ENCODE measurements at regions of chr1 and their contacts with region 1.

Region 1: GRCh38 chr1:151281969-151282882 is at the start of gene ZNF687:
- DNase-seq: peak; percentile 98
- H3K4me3 Mint-ChIP-seq: peak within 1 kb of the TSS; percentile 94
- H3K27ac Mint-ChIP-seq: peak within 1 kb of the TSS; percentile 100
- H3K4me1 Mint-ChIP-seq: peaks cover 36% of the 10 kb centered on the region
- H3K27me3 Mint-ChIP-seq: no peaks in the 10 kb centered on the region
- total RNA-seq, gene ZNF687: 26.9 and 27.3 TPM in 2 replicates

Region 2: GRCh38 chr1:150642296-150642695 is 639.9 kb before region 1 on chr1:
- intact Hi-C with region 1: no loop called
- DNase-seq: no peak
- H3K4me3 Mint-ChIP-seq: no peak overlapping the region
- H3K27ac Mint-ChIP-seq: no peak overlapping the region
- H3K4me1 Mint-ChIP-seq: no peaks in the 10 kb centered on the region
- H3K27me3 Mint-ChIP-seq: no peaks in the 10 kb centered on the region

Region 3: DNA sequence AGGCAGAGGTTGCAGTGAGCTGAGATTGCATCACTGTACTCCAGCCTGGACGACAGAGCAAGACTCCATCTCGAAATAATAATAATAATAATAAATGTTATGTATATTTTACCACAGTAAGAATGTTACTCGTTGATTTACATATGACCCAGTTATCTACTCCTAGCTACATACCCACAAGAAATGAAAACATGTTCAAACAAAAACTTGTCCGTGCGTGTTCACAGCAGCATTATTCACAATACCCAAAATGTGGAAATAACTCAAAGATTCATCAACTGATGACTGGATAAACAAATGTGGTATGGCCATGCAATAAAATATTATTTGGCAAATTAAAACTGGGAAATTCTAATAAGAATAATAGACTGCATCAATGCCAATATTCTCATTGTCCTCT is 621.1 kb before region 1 on chr1:
- intact Hi-C with region 1: no loop called
- DNase-seq: no peak
- H3K4me3 Mint-ChIP-seq: no peak overlapping the region
- H3K27ac Mint-ChIP-seq: no peak overlapping the region
- H3K4me1 Mint-ChIP-seq: peaks cover 6% of the 10 kb centered on the region
- H3K27me3 Mint-ChIP-seq: no peaks in the 10 kb centered on the region

Region 4: GRCh38 chr1:151059078-151059907 is 222.9 kb before region 1 on chr1 and contains the start of gene CDC42SE1:
- intact Hi-C with region 1: loop called (anchors 5 kb)
- DNase-seq: peak; percentile 81
- H3K4me3 Mint-ChIP-seq: peak within 1 kb of the TSS; percentile 95
- H3K27ac Mint-ChIP-seq: peak within 1 kb of the TSS; percentile 97
- H3K4me1 Mint-ChIP-seq: peaks cover 65% of the 10 kb centered on the region
- H3K27me3 Mint-ChIP-seq: no peaks in the 10 kb centered on the region
- total RNA-seq, gene CDC42SE1: 216 and 219 TPM in 2 replicates

Region 5: GRCh38 chr1:151165738-151166505 is 116.3 kb before region 1 on chr1 and contains the starts of genes LYSMD1 and SCNM1:
- intact Hi-C with region 1: loop called (anchors 1 kb)
- DNase-seq: peak; percentile 96
- H3K4me3 Mint-ChIP-seq: peak within 1 kb of the TSS; percentile 95
- H3K27ac Mint-ChIP-seq: peak within 1 kb of the TSS; percentile 97
- H3K4me1 Mint-ChIP-seq: peaks cover 53% of the 10 kb centered on the region
- H3K27me3 Mint-ChIP-seq: peaks cover 2% of the 10 kb centered on the region
- total RNA-seq, gene LYSMD1: 4.0 and 5.0 TPM in 2 replicates
- total RNA-seq, gene SCNM1: 111 and 117 TPM in 2 replicates

Region 6: GRCh38 chr1:151254217-151255213 is 27.7 kb before region 1 on chr1 and contains the start of gene PSMD4:
- intact Hi-C with region 1: loop called (anchors 1 kb)
- DNase-seq: peak; percentile 91
- H3K4me3 Mint-ChIP-seq: peak within 1 kb of the TSS; percentile 98
- H3K27ac Mint-ChIP-seq: peak within 1 kb of the TSS; percentile 88
- H3K4me1 Mint-ChIP-seq: peaks cover 17% of the 10 kb centered on the region
- H3K27me3 Mint-ChIP-seq: no peaks in the 10 kb centered on the region
- total RNA-seq, gene PSMD4: 276 and 285 TPM in 2 replicates

Region 7: DNA sequence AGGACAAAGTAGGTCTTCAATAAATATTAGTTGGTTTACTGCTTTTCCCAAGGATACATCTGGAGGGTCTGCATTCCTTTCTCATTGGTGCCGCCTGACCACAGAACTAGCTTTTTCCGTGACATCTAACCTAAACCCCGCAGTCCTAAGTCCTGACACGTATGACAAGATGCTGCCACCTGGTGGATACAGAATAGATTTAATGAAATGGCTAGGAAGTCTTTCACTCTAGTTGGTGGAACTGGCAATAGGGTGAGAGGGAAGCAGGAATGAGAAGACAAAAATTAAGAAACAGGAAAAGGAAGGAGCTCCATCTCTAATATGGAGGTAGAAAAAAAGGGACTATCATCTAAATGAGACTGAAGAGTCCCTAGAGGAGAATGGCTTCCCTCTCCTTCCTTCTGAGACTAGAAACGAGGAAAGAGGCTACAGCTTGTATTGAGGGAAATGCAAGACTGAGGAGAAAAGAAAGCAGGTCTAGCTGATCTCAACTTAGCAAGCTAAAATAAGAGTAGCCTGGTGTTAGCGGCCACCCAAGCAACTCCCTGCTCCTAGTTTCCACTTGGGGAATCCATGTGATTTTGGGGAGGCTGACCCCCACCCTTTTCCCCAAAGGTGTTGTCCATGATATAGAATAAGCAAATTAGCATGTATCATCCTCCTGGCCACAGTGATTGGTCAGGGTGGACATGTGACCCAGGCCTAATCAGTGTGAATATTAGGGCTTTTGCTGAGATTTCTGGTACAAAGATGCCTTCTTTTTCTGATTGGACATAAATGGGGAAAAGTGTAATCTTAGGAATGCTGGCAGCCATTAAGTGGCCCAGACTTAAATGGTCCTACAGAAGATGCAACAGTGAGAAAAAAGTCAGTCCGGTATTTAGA is 58.9 kb after region 1 on chr1:
- intact Hi-C with region 1: loop called (anchors 1 kb)
- DNase-seq: peak; percentile 37
- H3K4me3 Mint-ChIP-seq: no peak overlapping the region
- H3K27ac Mint-ChIP-seq: peak overlapping the region; percentile 46
- H3K4me1 Mint-ChIP-seq: peaks cover 33% of the 10 kb centered on the region
- H3K27me3 Mint-ChIP-seq: no peaks in the 10 kb centered on the region

Region 8: DNA sequence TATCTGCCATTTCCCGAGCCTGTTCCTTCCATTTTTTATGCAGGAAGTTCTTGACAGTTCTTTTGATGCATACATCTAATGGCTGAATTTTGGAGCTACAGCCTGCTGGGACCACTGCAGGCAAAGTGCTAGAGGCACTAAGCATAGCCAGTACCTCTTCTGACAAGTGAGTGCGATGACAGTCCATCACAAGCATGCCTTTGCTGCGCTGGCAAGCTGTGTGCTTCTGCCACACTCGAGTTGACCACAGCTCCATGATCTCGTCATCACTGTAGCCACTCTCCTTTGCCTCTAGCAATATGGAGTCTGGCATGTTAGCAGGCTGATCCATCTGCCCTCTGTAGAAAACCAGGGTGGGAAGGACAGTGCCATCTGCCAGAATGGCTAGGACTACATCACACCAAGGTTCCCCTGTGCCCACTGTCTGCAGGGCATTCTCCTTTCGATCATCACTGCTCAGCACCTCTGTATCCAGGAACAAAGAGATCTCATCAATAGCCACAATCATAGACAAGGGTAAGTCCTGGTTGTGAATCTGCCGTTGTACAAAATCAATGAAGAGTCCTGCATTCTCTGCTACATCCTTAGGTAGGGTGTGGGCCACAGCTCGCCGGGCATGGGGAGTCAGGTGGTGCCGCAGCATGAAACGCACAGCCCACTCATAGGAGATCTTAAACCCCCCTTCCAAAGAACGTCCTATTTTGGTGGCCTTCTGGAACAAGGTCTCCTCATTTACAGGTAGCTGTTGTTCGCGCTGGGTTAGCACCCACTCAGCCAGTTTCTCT is 123.1 kb after region 1 on chr1:
- intact Hi-C with region 1: no loop called
- DNase-seq: no peak
- H3K4me3 Mint-ChIP-seq: no peak overlapping the region
- H3K27ac Mint-ChIP-seq: no peak overlapping the region
- H3K4me1 Mint-ChIP-seq: peaks cover 17% of the 10 kb centered on the region
- H3K27me3 Mint-ChIP-seq: no peaks in the 10 kb centered on the region

Region 9: GRCh38 chr1:151459331-151460046 is 177.3 kb after region 1 on chr1 and contains the start of gene POGZ:
- intact Hi-C with region 1: loop called (anchors 1 kb)
- DNase-seq: peak; percentile 88
- H3K4me3 Mint-ChIP-seq: peak within 1 kb of the TSS; percentile 90
- H3K27ac Mint-ChIP-seq: peak within 1 kb of the TSS; percentile 97
- H3K4me1 Mint-ChIP-seq: peaks cover 21% of the 10 kb centered on the region
- H3K27me3 Mint-ChIP-seq: peaks cover 13% of the 10 kb centered on the region
- total RNA-seq, gene POGZ: 89.1 and 91.1 TPM in 2 replicates

Region 10: GRCh38 chr1:151790071-151790940 is 508.1 kb after region 1 on chr1 and contains the start of gene TDRKH:
- intact Hi-C with region 1: loop called (anchors 1 kb)
- DNase-seq: peak; percentile 98
- H3K4me3 Mint-ChIP-seq: peak within 1 kb of the TSS; percentile 95
- H3K27ac Mint-ChIP-seq: peak within 1 kb of the TSS; percentile 78
- H3K4me1 Mint-ChIP-seq: peaks cover 33% of the 10 kb centered on the region
- H3K27me3 Mint-ChIP-seq: peaks cover 2% of the 10 kb centered on the region
- total RNA-seq, gene TDRKH: 14.6 and 16.4 TPM in 2 replicates

Region 11: GRCh38 chr1:151828965-151829698 is 546.9 kb after region 1 on chr1:
- intact Hi-C with region 1: no loop called
- DNase-seq: no peak
- H3K4me3 Mint-ChIP-seq: peak overlapping the region; percentile 68
- H3K27ac Mint-ChIP-seq: peak overlapping the region; percentile 89
- H3K4me1 Mint-ChIP-seq: peaks cover 79% of the 10 kb centered on the region
- H3K27me3 Mint-ChIP-seq: no peaks in the 10 kb centered on the region